ENCODE measurements at regions of chr3 and their contacts with region 1.

Region 1: DNA sequence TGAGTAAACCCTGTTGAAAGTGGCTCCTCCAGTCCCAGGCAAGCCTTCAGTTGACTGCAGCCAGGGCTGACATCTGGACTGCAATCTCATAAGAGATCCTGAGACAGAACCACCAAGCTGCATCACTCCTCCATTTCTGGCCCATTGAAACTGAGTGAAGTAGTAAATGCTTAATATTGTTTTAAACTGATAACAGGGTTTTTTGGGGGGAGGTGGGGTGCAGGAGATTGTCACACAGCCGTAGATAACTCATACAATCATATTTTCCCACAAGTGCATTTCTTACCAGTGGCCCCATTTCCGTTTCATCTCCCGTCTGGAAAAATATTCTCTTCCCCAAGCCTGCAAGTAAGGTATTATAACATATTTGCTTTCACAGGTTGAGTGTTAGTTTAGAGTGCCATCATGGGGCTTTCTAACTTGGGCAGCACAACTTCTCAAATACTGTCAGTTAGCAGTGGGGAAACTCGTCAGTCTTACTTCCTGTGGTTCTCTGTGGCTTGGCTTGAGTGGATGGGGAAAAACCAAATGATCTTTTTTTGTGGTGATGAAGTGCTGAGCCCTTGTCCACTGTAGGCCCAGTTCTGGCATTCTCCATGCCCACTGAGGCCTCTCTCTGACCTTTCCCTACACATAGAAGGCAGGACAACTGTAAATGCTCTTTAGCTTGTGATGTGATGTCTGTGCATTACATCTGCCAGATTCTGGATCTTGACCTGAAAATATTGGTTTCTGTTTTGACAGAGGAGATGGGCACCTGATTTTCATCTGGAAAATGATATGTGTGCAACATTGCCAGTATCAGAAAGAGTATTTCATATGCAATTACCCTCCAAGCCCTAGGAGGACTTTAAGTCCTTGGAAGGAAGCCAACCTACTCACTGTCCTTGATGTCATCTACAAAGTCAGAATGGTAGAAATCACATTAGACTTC is 90.1 kb upstream of the BHLHE40 start:
- DNase-seq: peak in 6 of 9 donors; percentile 9 to 51 (median 39)
- ATAC-seq: peak; percentile 90
- H3K4me3 ChIP-seq: no peak overlapping the region
- H3K4me3 Mint-ChIP-seq: peak overlapping the region in 8 of 10 donors; percentile 0 to 63 (median 36)
- H3K27ac ChIP-seq: no peak overlapping the region
- H3K27ac Mint-ChIP-seq: peak overlapping the region in 7 of 9 donors; percentile 18 to 91 (median 57)
- H3K4me1 ChIP-seq: peaks cover 13 to 15% of the 10 kb centered on the region in 2 donors
- H3K4me1 Mint-ChIP-seq: peaks cover 17 to 39% (median 18%) of the 10 kb centered on the region in 7 donors
- H3K27me3 ChIP-seq: no peaks in the 10 kb centered on the region
- H3K27me3 Mint-ChIP-seq: no peaks in the 10 kb centered on the region

Region 2: GRCh38 chr3:4722103-4722502 is 167.1 kb before region 1 on chr3:
- CTCF ChIA-PET with region 1: no interaction called
- POLR2A ChIA-PET with region 1: no interaction called
- intact Hi-C with region 1: loop called in 1 of 2 experiments (anchors 2 kb)
- DNase-seq: peak in 2 of 9 donors; percentile 27 to 33
- ATAC-seq: peak; percentile 76
- H3K4me3 ChIP-seq: no peak overlapping the region
- H3K4me3 Mint-ChIP-seq: peak overlapping the region in 1 of 10 donors; percentile 33
- H3K27ac ChIP-seq: no peak overlapping the region
- H3K27ac Mint-ChIP-seq: peak overlapping the region in 2 of 9 donors; percentile 34 to 82
- H3K4me1 ChIP-seq: no peaks in the 10 kb centered on the region
- H3K4me1 Mint-ChIP-seq: peaks cover 0 to 67% (median 9%) of the 10 kb centered on the region in 7 donors
- H3K27me3 ChIP-seq: no peaks in the 10 kb centered on the region
- H3K27me3 Mint-ChIP-seq: no peaks in the 10 kb centered on the region

Region 3: GRCh38 chr3:4906107-4906621 is 17.0 kb after region 1 on chr3:
- CTCF ChIA-PET with region 1: no interaction called
- POLR2A ChIA-PET with region 1: no interaction called
- intact Hi-C with region 1: loop called in 1 of 2 experiments (anchors 1 kb)
- DNase-seq: no peak
- ATAC-seq: no peak
- H3K4me3 ChIP-seq: no peak overlapping the region
- H3K4me3 Mint-ChIP-seq: peak overlapping the region in 2 of 10 donors; percentile 29 to 38
- H3K27ac ChIP-seq: no peak overlapping the region
- H3K27ac Mint-ChIP-seq: peak overlapping the region in 4 of 9 donors; percentile 7 to 75 (median 38)
- H3K4me1 ChIP-seq: peaks cover 14 to 35% of the 10 kb centered on the region in 2 donors
- H3K4me1 Mint-ChIP-seq: peaks cover 33 to 85% (median 58%) of the 10 kb centered on the region in 7 donors
- H3K27me3 ChIP-seq: no peaks in the 10 kb centered on the region
- H3K27me3 Mint-ChIP-seq: no peaks in the 10 kb centered on the region

Region 4: DNA sequence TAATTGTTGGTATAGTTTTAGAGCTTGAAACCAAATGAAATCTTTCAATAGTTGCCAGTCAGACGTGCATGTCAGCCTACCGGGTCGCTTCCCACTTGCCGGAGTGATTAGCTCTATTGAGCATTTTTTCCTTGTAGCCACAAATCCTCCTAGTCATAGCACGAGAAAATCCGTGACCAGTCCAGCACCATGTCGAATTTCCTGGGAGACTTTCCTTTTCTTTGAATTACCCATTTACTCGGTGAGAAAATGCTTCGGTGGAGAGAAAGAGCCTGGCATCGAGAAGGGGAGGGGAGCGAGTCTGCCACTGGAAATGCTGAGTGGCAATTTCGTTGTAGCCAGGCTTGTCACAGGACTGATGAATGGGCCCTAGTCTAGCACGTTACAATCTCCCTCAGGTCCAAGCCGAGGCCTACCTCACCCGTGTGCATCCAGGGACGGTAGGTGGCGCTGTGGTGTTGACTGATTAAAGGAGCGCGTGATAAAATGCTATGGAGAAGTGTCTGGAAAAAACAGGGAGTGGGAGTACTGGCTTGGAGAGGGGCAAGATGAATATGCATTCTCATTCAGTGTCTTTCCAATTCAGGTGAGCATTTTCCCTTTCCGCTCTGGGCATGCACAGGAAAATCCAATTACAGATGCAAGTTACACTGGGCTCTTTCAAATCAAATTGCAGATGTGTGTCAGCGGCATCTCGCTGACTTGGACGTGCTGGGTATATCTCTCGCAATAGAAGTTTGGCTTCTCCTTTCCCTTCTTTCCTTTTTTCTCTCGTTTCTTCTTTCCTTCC is 537.1 kb after region 1 on chr3:
- CTCF ChIA-PET with region 1: no interaction called
- POLR2A ChIA-PET with region 1: no interaction called
- intact Hi-C with region 1: no loop called
- DNase-seq: peak in 7 of 9 donors; percentile 13 to 67 (median 22)
- ATAC-seq: peak; percentile 74
- H3K4me3 ChIP-seq: no peak overlapping the region
- H3K4me3 Mint-ChIP-seq: peak overlapping the region in 1 of 10 donors; percentile 12
- H3K27ac ChIP-seq: no peak overlapping the region
- H3K27ac Mint-ChIP-seq: peak overlapping the region in 1 of 9 donors; percentile 4
- H3K4me1 ChIP-seq: no peaks in the 10 kb centered on the region
- H3K4me1 Mint-ChIP-seq: peaks cover 0 to 9% (median 5%) of the 10 kb centered on the region in 7 donors
- H3K27me3 ChIP-seq: no peaks in the 10 kb centered on the region
- H3K27me3 Mint-ChIP-seq: peaks cover 0 to 19% (median 8%) of the 10 kb centered on the region in 5 donors

Measured in naive thymus-derived CD4-positive, alpha-beta T cell (primary cell).